ENCODE measurements at regions of chr15 and their contacts with region 1.

Region 1: DNA sequence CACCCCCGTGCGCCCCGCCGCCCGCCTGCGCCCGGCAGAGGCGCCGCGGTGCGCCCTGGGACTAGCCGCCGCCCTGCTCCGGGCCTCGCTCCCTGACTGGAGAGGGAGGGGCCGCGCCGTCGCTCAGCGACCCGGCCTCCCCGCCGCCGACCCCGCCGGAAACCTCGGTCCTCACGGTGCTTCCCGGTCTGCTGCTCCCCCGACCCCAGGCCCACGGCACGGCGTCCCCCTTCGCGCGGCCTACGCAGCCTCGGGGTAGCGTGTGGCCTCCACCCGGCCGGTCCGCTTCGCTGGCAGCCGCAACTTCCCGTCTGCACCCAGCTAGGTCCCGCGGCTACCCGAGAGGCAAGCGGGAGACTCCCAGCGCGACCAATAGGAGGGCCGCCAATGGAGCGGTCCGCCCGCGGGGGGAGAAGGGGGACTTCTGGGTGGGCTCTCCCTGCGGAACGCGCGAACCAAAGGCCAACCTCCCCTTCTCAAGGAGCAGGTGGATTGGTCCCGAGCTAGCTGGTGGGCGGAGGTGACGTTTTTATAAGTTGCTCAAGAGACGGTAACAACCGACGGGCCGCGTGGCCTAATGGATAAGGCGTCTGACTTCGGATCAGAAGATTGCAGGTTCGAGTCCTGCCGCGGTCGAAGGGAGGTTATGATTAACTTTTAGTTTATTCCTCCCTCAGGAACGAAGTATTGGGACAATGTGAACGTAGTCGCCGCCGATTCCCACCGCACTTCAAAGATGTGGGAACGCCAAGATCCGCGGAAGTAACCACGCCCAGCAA is at the start of gene POLG:
- DNase-seq: peak; percentile 97
- ATAC-seq: peak; percentile 92
- H3K4me3 Mint-ChIP-seq: peak within 1 kb of the TSS; percentile 88
- H3K27ac Mint-ChIP-seq: peak within 1 kb of the TSS; percentile 99
- H3K4me1 Mint-ChIP-seq: peaks cover 44% of the 10 kb centered on the region
- H3K27me3 Mint-ChIP-seq: peaks cover 2% of the 10 kb centered on the region
- CTCF ChIP-seq: no peak
- total RNA-seq, gene POLG: 116 and 144 TPM in 2 replicates

Region 2: DNA sequence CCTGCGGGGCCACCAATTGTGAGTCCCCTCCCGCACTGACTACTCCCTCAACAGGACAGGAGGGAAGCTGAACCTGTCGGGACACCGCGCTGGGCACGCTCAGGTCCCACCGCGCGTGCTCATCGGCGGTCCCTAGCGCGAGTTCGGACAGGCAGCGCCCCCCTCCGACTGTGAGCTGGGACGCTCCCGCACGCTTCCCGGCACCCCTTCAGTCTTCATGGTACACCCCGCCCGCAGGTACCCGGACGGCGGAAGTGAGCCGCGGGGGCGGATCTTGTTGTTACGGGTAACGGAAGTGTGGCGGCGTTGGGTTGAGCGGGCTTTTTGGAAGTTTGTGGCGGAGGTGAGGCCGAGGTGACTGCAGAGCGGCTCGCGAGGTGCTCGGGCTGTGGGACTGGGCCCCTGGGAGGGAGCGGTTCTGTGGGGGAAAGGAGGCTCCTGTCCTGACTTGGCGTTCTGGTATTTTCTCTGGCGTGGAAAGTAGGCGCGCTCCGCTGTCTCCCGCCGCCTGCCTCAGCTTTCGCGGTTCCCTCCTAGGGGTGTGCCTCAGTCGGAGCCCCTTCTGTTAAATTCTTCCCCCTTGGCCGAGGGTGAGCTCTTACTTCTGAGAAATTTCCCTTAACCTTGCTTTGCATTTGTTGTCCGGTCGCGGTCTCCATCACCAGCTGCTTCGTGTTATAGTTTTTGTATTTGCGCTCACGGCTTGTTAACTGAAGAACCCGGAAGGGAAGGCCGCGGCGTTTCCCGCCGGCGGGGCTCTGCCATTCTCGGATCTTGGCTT is 90.8 kb before region 1 on chr15 and contains the start of gene FANCI:
- CTCF ChIA-PET with region 1: no interaction called
- POLR2A ChIA-PET with region 1: interaction called, 8 read pairs
- intact Hi-C with region 1: loop called (anchors 1 kb)
- DNase-seq: peak; percentile 94
- ATAC-seq: peak; percentile 97
- H3K4me3 Mint-ChIP-seq: peak within 1 kb of the TSS; percentile 90
- H3K27ac Mint-ChIP-seq: peak within 1 kb of the TSS; percentile 75
- H3K4me1 Mint-ChIP-seq: peaks cover 29% of the 10 kb centered on the region
- H3K27me3 Mint-ChIP-seq: no peaks in the 10 kb centered on the region
- CTCF ChIP-seq: no peak
- total RNA-seq, gene FANCI: 13.8 and 16.6 TPM in 2 replicates

Region 3: DNA sequence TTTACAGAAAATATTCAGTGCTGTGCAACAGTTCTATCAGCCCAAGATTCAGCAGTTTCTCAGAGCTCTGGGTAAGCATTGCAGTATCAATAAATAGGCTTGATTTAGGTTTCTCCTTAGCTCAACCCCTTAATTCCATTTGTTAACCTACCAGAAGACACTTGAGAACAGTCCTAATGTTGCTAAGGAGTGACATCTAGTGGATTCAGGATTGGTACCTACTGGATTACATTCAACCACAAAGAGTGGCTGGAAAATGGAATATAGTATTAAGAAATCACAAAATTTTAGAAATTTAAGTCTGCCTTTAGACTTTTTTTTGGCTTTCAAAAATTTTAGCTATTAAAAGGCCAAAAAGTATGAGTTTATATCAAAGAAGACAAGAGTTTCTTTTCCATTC is 34.8 kb before region 1 on chr15:
- CTCF ChIA-PET with region 1: no interaction called
- POLR2A ChIA-PET with region 1: no interaction called
- intact Hi-C with region 1: no loop called
- DNase-seq: no peak
- ATAC-seq: no peak
- H3K4me3 Mint-ChIP-seq: no peak overlapping the region
- H3K27ac Mint-ChIP-seq: no peak overlapping the region
- H3K4me1 Mint-ChIP-seq: no peaks in the 10 kb centered on the region
- H3K27me3 Mint-ChIP-seq: no peaks in the 10 kb centered on the region
- CTCF ChIP-seq: no peak

Region 4: DNA sequence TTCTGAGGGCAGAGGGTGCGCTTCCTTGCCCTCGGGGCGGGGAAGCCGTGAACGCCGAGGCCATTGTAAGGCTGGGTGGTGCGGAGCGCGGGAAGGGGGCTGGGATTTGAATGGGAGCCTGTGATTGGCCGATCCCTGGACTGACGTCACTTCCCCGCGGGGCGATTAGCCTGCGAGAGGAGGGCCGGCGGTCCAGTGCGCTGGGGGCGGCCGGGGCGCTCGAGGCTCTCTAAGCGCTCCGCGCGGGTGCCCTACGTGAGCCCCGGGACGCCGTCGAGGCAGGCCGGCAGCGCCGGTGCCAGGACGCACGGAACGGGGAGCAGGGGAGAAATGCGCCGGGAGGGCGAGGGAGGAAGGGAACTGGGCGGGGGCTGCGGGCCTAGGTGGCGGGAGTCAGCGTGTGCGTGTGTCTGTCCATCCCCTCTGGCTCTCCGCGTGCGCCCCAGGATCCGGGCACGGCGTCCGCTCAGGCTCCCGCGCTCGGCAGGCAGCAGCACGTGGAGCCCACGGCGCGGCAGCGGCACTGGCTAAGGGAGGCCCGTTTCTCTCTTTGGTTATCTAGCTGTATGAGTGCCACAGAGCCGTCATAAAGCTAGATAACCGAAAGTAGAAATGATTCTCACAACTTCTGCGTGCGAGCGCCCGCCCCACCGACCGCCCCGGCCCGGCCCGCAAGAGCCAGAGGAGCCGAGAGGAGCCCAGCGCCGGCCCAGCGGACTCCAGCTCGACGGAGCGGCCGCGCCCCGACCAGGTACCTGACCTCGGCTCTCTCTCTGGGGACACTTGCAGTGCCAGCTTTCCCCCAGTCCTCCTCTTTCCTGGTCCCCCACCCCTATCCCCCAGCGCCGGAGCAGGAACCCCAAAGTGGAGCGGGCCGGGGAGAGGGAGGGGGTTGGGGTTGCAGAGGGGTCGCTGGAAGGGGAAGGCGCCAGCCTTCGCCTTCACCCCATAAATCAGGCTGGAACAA is 33.1 kb after region 1 on chr15:
- CTCF ChIA-PET with region 1: no interaction called
- POLR2A ChIA-PET with region 1: no interaction called
- intact Hi-C with region 1: no loop called
- DNase-seq: no peak
- ATAC-seq: peak; percentile 28
- H3K4me3 Mint-ChIP-seq: peak overlapping the region; percentile 38
- H3K27ac Mint-ChIP-seq: no peak overlapping the region
- H3K4me1 Mint-ChIP-seq: peaks cover 21% of the 10 kb centered on the region
- H3K27me3 Mint-ChIP-seq: peaks cover 75% of the 10 kb centered on the region
- CTCF ChIP-seq: no peak

Region 5: DNA sequence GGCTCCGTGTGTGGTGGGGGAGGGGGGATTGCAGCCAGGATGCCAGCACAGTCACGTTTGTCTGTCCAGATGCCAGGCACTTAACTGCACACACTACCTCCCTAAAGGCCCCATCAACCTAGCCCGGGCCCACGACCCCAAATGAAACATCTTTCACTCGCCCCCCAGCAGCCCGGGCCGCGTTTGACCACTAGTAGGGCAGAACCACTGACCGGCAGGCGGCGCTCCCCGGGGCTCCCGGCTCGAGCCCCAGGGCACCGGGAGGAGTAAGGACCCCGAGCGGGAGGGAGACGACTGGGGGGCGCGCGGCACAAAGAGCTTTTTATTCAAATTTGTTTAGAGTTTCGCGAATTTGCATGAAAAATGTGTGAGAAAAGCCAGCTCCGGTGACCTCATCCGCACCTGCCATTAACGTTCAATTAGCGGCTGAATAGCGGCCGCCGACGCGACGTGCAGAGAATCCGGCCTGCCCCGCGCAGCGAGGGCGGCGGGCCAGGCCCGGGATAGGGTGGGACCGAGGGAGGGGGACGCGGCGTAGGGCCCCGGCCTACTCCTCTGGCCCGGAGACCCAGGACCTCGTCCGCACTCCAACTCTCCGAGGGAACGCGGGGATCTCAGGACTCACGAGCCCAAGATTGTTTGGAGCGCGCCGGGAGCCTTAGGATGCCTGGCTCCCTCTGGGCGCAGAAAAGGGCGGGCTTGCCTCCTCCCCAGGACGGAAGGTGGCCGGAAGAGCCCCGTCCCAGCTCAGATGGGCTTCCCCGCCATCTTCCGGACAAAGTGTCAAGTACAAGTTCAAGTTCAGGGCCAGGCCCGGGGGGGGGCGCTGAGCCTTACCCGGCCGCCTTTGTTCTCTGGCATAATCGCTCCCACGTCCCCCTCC is 64.8 kb after region 1 on chr15:
- CTCF ChIA-PET with region 1: no interaction called
- POLR2A ChIA-PET with region 1: no interaction called
- intact Hi-C with region 1: loop called (anchors 2 kb)
- DNase-seq: peak; percentile 35
- ATAC-seq: peak; percentile 76
- H3K4me3 Mint-ChIP-seq: peak overlapping the region; percentile 84
- H3K27ac Mint-ChIP-seq: no peak overlapping the region
- H3K4me1 Mint-ChIP-seq: peaks cover 21% of the 10 kb centered on the region
- H3K27me3 Mint-ChIP-seq: peaks cover 50% of the 10 kb centered on the region
- CTCF ChIP-seq: no peak

Region 6: GRCh38 chr15:89442671-89443307 is 108.1 kb after region 1 on chr15:
- CTCF ChIA-PET with region 1: interaction called, 3 read pairs
- POLR2A ChIA-PET with region 1: no interaction called
- intact Hi-C with region 1: loop called (anchors 1 kb)
- DNase-seq: peak; percentile 29
- ATAC-seq: no peak
- H3K4me3 Mint-ChIP-seq: no peak overlapping the region
- H3K27ac Mint-ChIP-seq: no peak overlapping the region
- H3K4me1 Mint-ChIP-seq: peaks cover 31% of the 10 kb centered on the region
- H3K27me3 Mint-ChIP-seq: peaks cover 9% of the 10 kb centered on the region
- CTCF ChIP-seq: no peak

Region 7: DNA sequence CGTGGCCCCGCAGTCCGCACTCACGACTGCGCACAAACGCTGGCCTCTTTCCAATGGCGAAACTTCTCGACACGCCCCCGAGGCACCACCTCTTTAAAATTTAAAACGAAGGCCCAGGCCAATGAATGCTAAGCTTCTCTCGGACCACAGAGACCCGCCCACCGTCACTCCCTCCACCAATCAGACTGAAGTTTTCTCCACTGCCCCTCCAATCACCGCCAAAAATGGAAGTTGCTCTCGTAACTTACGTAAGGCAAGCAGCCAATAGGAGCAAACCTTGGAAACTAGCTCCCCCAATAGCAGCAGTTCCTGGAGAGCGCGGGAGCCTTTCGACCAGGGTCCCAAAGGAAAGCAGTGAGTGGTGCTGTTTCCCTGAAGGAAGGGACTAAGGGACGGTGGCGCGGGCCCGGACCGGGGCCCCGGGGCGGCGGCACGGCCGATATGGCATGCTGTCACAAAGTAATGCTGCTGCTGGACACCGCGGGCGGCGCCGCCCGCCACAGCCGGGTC is 240.5 kb after region 1 on chr15 and contains the start of gene TICRR:
- CTCF ChIA-PET with region 1: no interaction called
- POLR2A ChIA-PET with region 1: interaction called, 4 read pairs
- intact Hi-C with region 1: loop called (anchors 1 kb)
- DNase-seq: peak; percentile 80
- ATAC-seq: peak; percentile 97
- H3K4me3 Mint-ChIP-seq: peak within 1 kb of the TSS; percentile 82
- H3K27ac Mint-ChIP-seq: peak within 1 kb of the TSS; percentile 31
- H3K4me1 Mint-ChIP-seq: peaks cover 11% of the 10 kb centered on the region
- H3K27me3 Mint-ChIP-seq: peaks cover 10% of the 10 kb centered on the region
- CTCF ChIP-seq: no peak
- total RNA-seq, gene TICRR: 0.69 TPM in 2 replicates

Region 8: GRCh38 chr15:90571063-90571541 is 1236.4 kb after region 1 on chr15:
- CTCF ChIA-PET with region 1: no interaction called
- POLR2A ChIA-PET with region 1: no interaction called
- intact Hi-C with region 1: no loop called
- DNase-seq: peak; percentile 25
- ATAC-seq: peak; percentile 81
- H3K4me3 Mint-ChIP-seq: peak overlapping the region; percentile 68
- H3K27ac Mint-ChIP-seq: peak overlapping the region; percentile 84
- H3K4me1 Mint-ChIP-seq: peaks cover 61% of the 10 kb centered on the region
- H3K27me3 Mint-ChIP-seq: no peaks in the 10 kb centered on the region
- CTCF ChIP-seq: no peak

Region 9: GRCh38 chr15:90994417-90995311 is 1660.0 kb after region 1 on chr15 and contains the start of gene PRC1:
- CTCF ChIA-PET with region 1: no interaction called
- POLR2A ChIA-PET with region 1: no interaction called
- intact Hi-C with region 1: loop called (anchors 10 kb)
- DNase-seq: peak; percentile 95
- ATAC-seq: peak; percentile 96
- H3K4me3 Mint-ChIP-seq: peak within 1 kb of the TSS; percentile 99
- H3K27ac Mint-ChIP-seq: peak within 1 kb of the TSS; percentile 96
- H3K4me1 Mint-ChIP-seq: peaks cover 23% of the 10 kb centered on the region
- H3K27me3 Mint-ChIP-seq: no peaks in the 10 kb centered on the region
- CTCF ChIP-seq: no peak
- total RNA-seq, gene PRC1: 8.1 and 9.3 TPM in 2 replicates

Measured in activated B cell treated with CpG ODN at 0.5 μM for 24 hours (primary cell).